ENCODE measurements at regions of chr3 and their contacts with region 1.

Region 1: GRCh38 chr3:4834403-4834866 is 144.8 kb upstream of the BHLHE40 start:
- DNase-seq: peak; percentile 74
- H3K4me3 Mint-ChIP-seq: peak overlapping the region; percentile 74
- H3K27ac Mint-ChIP-seq: peak overlapping the region; percentile 96
- H3K4me1 Mint-ChIP-seq: peaks cover 80% of the 10 kb centered on the region
- H3K27me3 Mint-ChIP-seq: no peaks in the 10 kb centered on the region

Region 2: GRCh38 chr3:4741404-4742307 is 92.8 kb before region 1 on chr3:
- intact Hi-C with region 1: loop called (anchors 2 kb)
- DNase-seq: no peak
- H3K4me3 Mint-ChIP-seq: no peak overlapping the region
- H3K27ac Mint-ChIP-seq: peak overlapping the region; percentile 87
- H3K4me1 Mint-ChIP-seq: peaks cover 67% of the 10 kb centered on the region
- H3K27me3 Mint-ChIP-seq: no peaks in the 10 kb centered on the region

Region 3: GRCh38 chr3:4821975-4822374 is 12.5 kb before region 1 on chr3:
- intact Hi-C with region 1: loop called (anchors 1 kb)
- DNase-seq: peak; percentile 77
- H3K4me3 Mint-ChIP-seq: peak overlapping the region; percentile 20
- H3K27ac Mint-ChIP-seq: peak overlapping the region; percentile 93
- H3K4me1 Mint-ChIP-seq: peaks cover 84% of the 10 kb centered on the region
- H3K27me3 Mint-ChIP-seq: no peaks in the 10 kb centered on the region

Region 4: GRCh38 chr3:4850928-4851265 is 16.5 kb after region 1 on chr3:
- intact Hi-C with region 1: loop called (anchors 1 kb)
- DNase-seq: no peak
- H3K4me3 Mint-ChIP-seq: peak overlapping the region; percentile 28
- H3K27ac Mint-ChIP-seq: peak overlapping the region; percentile 97
- H3K4me1 Mint-ChIP-seq: peaks cover 81% of the 10 kb centered on the region
- H3K27me3 Mint-ChIP-seq: no peaks in the 10 kb centered on the region

Region 5: DNA sequence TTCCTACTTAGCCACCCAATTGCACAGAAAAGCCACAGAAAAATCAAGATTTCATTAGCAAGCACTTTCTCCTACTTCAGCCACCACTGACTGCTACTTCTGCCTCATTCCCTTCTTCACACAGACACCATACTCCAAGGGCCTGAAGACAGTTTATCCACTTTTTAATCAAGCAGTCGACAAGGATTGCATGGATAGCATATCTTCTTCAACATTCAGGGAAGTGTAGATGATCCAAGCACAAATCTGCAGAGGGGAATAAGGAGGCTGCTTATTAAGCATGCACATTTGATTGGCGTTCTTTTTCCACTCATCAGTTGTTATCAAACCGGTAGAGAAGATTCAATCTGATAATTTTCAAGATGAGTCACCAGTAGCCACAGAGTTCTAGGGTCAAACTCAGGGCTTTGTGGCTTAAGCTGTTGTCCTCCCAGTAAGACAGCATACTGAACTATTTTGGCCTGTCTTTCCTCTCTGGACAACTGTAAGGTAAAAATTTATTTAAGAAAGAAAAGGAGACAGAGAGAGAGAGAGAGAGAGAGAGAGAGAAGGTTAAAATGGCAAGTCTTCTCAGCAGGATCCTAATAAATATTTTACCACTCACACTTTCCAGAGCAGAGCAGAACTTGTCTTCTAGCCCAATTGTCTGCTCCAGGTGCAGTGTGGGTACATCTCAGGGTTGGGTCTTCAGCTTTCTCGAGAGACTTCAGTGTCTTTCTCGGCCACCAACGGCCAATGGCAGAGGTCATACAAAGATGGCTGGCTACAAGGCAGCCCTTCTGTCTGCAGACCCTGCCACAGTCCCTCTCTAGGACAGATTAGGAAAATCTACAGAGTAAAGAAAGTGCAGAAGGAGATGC is 64.2 kb after region 1 on chr3:
- intact Hi-C with region 1: loop called (anchors 1 kb)
- DNase-seq: no peak
- H3K4me3 Mint-ChIP-seq: peak overlapping the region; percentile 26
- H3K27ac Mint-ChIP-seq: peak overlapping the region; percentile 94
- H3K4me1 Mint-ChIP-seq: peaks cover 81% of the 10 kb centered on the region
- H3K27me3 Mint-ChIP-seq: no peaks in the 10 kb centered on the region

Region 6: GRCh38 chr3:5112043-5112442 is 277.6 kb after region 1 on chr3:
- intact Hi-C with region 1: no loop called
- DNase-seq: no peak
- H3K4me3 Mint-ChIP-seq: no peak overlapping the region
- H3K27ac Mint-ChIP-seq: no peak overlapping the region
- H3K4me1 Mint-ChIP-seq: peaks cover 4% of the 10 kb centered on the region
- H3K27me3 Mint-ChIP-seq: no peaks in the 10 kb centered on the region

Measured in activated T-helper 2 cell treated with anti-CD3 and anti-CD28 coated beads, Interferon-gamma antibody, Interleukin-2, Interleukin-4, amounts not matched to agents 10 μg/mL and 5 μg/mL and 100 μg/mL, durations not matched to agents 14 hours and 24 hours and 36 hours (primary cell).